Esophagus muscularis mucosa (tissue), 4 donors: ENCODE measurements at regions of chr3 and their contacts with region 1.

Region 1: GRCh38 chr3:178436773-178437172 is 99.5 kb upstream of the KCNMB2 start:
- DNase-seq: no peak
- H3K4me3 ChIP-seq: no peak overlapping the region
- H3K27ac ChIP-seq: no peak overlapping the region
- H3K4me1 ChIP-seq: peaks cover 0 to 18% (median 10%) of the 10 kb centered on the region in 4 donors
- H3K27me3 ChIP-seq: no peaks in the 10 kb centered on the region
- CTCF ChIP-seq: peak; percentile 59 to 64 (median 64)
- EP300 ChIP-seq: no peak
- POLR2A ChIP-seq: no peak

Region 2: DNA sequence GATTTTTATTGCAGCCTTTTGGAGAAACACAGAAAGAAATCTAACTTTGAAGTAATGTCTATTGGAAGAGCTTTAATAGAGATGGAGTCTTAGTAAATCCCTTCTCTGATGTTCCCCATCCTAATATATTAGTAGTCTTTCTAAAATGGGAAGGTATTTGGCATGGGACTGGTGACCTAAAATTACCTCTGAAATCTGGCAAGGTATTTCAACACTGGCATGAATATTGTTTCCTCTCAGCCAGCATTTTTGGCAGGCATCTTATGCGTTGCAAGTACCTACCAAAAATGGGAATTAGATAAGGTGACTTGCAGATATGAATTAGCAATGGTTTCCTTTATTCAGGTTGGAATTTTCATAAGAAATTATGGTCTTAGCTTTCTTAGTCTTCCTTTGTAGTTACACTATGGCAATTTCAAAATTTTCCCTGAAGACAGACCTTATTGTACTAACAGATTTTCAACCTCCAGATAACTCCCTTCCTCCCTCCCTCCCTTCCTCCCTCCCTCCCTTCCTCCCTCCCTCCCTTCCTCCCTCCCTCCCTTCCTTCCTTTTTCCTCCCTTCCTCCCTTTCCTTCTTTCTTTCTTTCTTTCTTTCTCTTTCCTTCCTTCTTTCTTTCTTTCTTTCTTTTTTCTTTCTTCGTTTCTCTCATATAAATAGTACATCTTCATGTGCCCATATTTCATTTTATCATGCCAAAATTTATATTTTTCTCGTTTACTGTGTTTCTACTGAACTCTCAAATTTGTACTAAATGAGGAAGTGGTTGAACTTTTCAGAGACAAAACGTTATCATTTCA is 68.8 kb before region 1 on chr3:
- intact Hi-C with region 1: no loop called
- DNase-seq: no peak
- H3K4me3 ChIP-seq: no peak overlapping the region
- H3K27ac ChIP-seq: peak overlapping the region; percentile 42 to 72 (median 54)
- H3K4me1 ChIP-seq: peaks cover 5 to 26% (median 23%) of the 10 kb centered on the region in 4 donors
- H3K27me3 ChIP-seq: no peaks in the 10 kb centered on the region
- CTCF ChIP-seq: no peak
- EP300 ChIP-seq: no peak
- POLR2A ChIP-seq: no peak

Region 3: GRCh38 chr3:178385280-178385952 is 51.4 kb before region 1 on chr3:
- intact Hi-C with region 1: no loop called
- DNase-seq: no peak
- H3K4me3 ChIP-seq: no peak overlapping the region
- H3K27ac ChIP-seq: peak overlapping the region in 3 of 4 donors; percentile 52 to 68 (median 65)
- H3K4me1 ChIP-seq: peaks cover 28 to 39% (median 37%) of the 10 kb centered on the region in 4 donors
- H3K27me3 ChIP-seq: no peaks in the 10 kb centered on the region
- CTCF ChIP-seq: peak; percentile 88 to 92 (median 91)
- EP300 ChIP-seq: no peak
- POLR2A ChIP-seq: no peak

Region 4: DNA sequence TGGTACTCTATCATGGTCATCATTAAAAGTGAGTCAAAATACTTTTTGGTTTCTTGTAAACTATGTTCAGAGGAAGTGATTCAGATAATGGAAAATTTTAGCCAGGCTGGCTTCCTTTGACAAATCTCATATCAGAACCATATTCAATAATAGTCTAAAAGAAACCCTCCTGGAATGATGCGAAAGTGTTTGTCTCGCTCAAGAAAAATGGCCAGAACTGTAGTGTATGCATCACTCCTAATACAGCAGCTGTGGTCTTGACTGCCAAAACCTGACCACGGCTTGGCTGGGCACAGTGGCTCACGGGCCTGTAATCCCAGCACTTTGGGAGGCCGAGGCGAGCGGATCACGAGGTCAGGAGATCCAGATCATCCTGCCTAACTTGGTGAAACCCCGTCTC is 63.9 kb after region 1 on chr3:
- intact Hi-C with region 1: no loop called
- DNase-seq: no peak
- H3K4me3 ChIP-seq: no peak overlapping the region
- H3K27ac ChIP-seq: no peak overlapping the region
- H3K4me1 ChIP-seq: no peaks in the 10 kb centered on the region
- H3K27me3 ChIP-seq: no peaks in the 10 kb centered on the region
- CTCF ChIP-seq: no peak
- EP300 ChIP-seq: no peak
- POLR2A ChIP-seq: no peak

Region 5: DNA sequence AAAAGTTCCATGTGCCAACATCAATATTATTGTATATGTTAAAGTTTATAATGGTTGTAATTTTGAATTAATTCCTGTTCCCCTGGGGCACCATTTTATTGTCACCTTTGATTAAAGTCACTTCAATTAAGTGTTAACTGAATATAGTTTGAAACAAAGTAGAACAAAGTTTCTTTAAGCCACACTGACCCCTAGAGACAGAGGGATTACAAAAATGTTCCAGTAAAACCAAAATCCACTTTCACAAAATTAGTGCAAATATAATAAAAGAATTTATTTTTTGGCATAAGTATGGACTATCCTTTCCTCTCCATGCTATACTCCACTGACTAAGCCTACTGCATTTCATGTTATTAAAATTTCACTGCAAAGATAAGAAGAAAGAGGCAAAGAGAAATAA is 511.0 kb after region 1 on chr3:
- intact Hi-C with region 1: loop called (anchors 5 kb)
- DNase-seq: no peak
- H3K4me3 ChIP-seq: no peak overlapping the region
- H3K27ac ChIP-seq: no peak overlapping the region
- H3K4me1 ChIP-seq: no peaks in the 10 kb centered on the region
- H3K27me3 ChIP-seq: no peaks in the 10 kb centered on the region
- CTCF ChIP-seq: peak in 2 of 3 experiments; percentile 29 to 37
- EP300 ChIP-seq: no peak
- POLR2A ChIP-seq: no peak

Region 6: DNA sequence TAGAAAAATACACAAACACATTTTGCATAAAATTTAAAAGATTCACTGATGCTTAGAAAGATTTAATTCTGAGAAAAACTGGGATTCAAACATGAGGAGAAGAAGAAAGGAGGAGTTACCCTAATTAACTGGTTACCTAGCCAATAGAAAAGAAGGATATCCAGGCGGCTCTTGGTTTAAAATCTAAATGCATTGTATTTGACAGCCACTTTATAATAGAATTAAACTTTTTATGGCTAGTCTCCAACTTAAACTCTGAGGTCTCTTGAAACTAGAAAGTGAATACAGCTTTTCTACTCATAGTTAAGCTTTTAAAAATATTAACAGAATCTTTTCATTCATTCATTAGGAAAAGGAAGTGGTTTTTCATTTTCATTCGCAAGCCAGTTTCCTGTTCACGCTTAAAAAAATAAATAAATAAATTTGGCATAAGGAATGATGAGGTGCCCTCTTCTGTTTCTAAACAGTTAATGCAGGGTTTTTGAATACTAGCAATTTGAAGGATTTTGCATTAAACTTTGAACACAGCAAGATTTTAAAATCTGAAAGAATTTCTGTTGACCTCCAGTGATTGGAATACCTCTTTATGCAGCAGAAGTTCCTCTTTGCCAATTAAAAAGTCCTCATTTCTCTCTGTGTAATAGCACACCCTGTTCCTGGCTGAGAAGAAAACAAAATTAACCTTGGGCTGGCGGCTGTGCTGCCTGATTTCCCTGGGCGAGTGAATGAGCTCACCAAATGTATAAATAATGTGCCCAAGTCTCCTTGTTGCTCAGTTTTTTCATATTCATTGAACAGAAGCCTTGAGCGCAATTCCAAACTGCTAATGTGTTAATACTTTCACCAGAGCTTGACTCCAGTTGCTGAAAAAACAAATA is 529.8 kb after region 1 on chr3:
- intact Hi-C with region 1: loop called (anchors 5 kb)
- DNase-seq: no peak
- H3K4me3 ChIP-seq: peak overlapping the region; percentile 14 to 41 (median 18)
- H3K27ac ChIP-seq: peak overlapping the region in 3 of 4 donors; percentile 10 to 58 (median 15)
- H3K4me1 ChIP-seq: peaks cover 13 to 20% (median 14%) of the 10 kb centered on the region in 4 donors
- H3K27me3 ChIP-seq: no peaks in the 10 kb centered on the region
- CTCF ChIP-seq: peak; percentile 57 to 62 (median 61)
- EP300 ChIP-seq: no peak
- POLR2A ChIP-seq: no peak